ENCODE measurements at regions of chr15 and their contacts with region 1.

Region 1: GRCh38 chr15:73081321-73081958 is 29.2 kb downstream of the NEO1 start:
- DNase-seq: peak in 3 of 9 experiments; percentile 14 to 70 (median 64)
- ATAC-seq: no peak
- H3K4me3 ChIP-seq: no peak overlapping the region
- H3K4me3 Mint-ChIP-seq: no peak overlapping the region
- H3K27ac ChIP-seq: no peak overlapping the region
- H3K27ac Mint-ChIP-seq: no peak overlapping the region
- H3K4me1 ChIP-seq: no peaks in the 10 kb centered on the region
- H3K4me1 Mint-ChIP-seq: no peaks in the 10 kb centered on the region
- H3K27me3 ChIP-seq: no peaks in the 10 kb centered on the region
- H3K27me3 Mint-ChIP-seq: peaks cover 3% of the 10 kb centered on the region
- CTCF ChIP-seq: peak; percentile 72

Region 2: GRCh38 chr15:72599855-72600464 is 481.5 kb before region 1 on chr15:
- CTCF ChIA-PET with region 1: no interaction called
- POLR2A ChIA-PET with region 1: no interaction called
- intact Hi-C with region 1: loop called (anchors 5 to 10 kb)
- DNase-seq: peak in 4 of 9 experiments; percentile 5 to 56 (median 38)
- ATAC-seq: peak; percentile 34
- H3K4me3 ChIP-seq: no peak overlapping the region
- H3K4me3 Mint-ChIP-seq: no peak overlapping the region
- H3K27ac ChIP-seq: no peak overlapping the region
- H3K27ac Mint-ChIP-seq: no peak overlapping the region
- H3K4me1 ChIP-seq: no peaks in the 10 kb centered on the region
- H3K4me1 Mint-ChIP-seq: no peaks in the 10 kb centered on the region
- H3K27me3 ChIP-seq: no peaks in the 10 kb centered on the region
- H3K27me3 Mint-ChIP-seq: no peaks in the 10 kb centered on the region
- CTCF ChIP-seq: peak; percentile 73

Region 3: DNA sequence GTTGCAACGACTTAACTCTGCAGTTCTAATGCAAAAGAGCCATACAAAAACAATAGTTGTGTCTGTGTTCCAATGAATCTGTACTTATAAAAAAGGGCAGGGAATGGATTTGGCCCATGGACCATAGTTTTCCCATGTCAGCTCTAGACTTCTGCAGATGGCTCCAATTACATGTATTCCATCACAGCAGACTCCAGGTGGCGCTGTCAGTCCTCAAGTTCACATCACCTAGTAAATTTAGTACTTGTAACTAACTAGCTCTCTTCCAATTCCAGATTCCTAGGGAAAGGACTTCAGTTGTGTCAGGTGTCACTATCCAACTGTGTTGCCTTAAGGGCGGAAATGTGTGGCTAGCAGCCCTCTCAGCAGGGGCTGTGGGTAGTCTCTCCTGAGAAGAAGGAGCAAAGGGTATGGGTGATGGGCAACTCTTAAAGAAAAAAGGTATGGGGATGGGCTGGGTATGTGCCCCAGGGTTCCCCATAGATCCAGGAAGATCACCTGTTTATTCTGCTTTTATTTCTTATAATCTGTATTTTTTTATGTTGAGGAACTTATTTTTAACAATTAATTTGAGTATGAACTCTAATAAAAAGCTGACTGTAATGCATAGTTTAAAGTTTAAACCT is 359.3 kb before region 1 on chr15:
- CTCF ChIA-PET with region 1: interaction called, 23 read pairs
- POLR2A ChIA-PET with region 1: interaction called, 3 read pairs
- intact Hi-C with region 1: loop called (anchors 1 kb)
- DNase-seq: peak; percentile 37 to 76 (median 71)
- ATAC-seq: no peak
- H3K4me3 ChIP-seq: no peak overlapping the region
- H3K4me3 Mint-ChIP-seq: no peak overlapping the region
- H3K27ac ChIP-seq: no peak overlapping the region
- H3K27ac Mint-ChIP-seq: no peak overlapping the region
- H3K4me1 ChIP-seq: no peaks in the 10 kb centered on the region
- H3K4me1 Mint-ChIP-seq: no peaks in the 10 kb centered on the region
- H3K27me3 ChIP-seq: no peaks in the 10 kb centered on the region
- H3K27me3 Mint-ChIP-seq: no peaks in the 10 kb centered on the region
- CTCF ChIP-seq: peak; percentile 70

Region 4: GRCh38 chr15:72796515-72797337 is 284.7 kb before region 1 on chr15:
- CTCF ChIA-PET with region 1: interaction called, 5 read pairs
- POLR2A ChIA-PET with region 1: no interaction called
- intact Hi-C with region 1: loop called (anchors 1 to 2 kb)
- DNase-seq: peak in 8 of 9 experiments; percentile 19 to 73 (median 43)
- ATAC-seq: peak; percentile 82
- H3K4me3 ChIP-seq: peak overlapping the region; percentile 57 to 63
- H3K4me3 Mint-ChIP-seq: peak overlapping the region; percentile 83
- H3K27ac ChIP-seq: no peak overlapping the region
- H3K27ac Mint-ChIP-seq: no peak overlapping the region
- H3K4me1 ChIP-seq: peaks cover 9% of the 10 kb centered on the region
- H3K4me1 Mint-ChIP-seq: peaks cover 10% of the 10 kb centered on the region
- H3K27me3 ChIP-seq: peaks cover 0 to 2% of the 10 kb centered on the region in 2 experiments
- H3K27me3 Mint-ChIP-seq: peaks cover 45% of the 10 kb centered on the region
- CTCF ChIP-seq: peak; percentile 57

Region 5: DNA sequence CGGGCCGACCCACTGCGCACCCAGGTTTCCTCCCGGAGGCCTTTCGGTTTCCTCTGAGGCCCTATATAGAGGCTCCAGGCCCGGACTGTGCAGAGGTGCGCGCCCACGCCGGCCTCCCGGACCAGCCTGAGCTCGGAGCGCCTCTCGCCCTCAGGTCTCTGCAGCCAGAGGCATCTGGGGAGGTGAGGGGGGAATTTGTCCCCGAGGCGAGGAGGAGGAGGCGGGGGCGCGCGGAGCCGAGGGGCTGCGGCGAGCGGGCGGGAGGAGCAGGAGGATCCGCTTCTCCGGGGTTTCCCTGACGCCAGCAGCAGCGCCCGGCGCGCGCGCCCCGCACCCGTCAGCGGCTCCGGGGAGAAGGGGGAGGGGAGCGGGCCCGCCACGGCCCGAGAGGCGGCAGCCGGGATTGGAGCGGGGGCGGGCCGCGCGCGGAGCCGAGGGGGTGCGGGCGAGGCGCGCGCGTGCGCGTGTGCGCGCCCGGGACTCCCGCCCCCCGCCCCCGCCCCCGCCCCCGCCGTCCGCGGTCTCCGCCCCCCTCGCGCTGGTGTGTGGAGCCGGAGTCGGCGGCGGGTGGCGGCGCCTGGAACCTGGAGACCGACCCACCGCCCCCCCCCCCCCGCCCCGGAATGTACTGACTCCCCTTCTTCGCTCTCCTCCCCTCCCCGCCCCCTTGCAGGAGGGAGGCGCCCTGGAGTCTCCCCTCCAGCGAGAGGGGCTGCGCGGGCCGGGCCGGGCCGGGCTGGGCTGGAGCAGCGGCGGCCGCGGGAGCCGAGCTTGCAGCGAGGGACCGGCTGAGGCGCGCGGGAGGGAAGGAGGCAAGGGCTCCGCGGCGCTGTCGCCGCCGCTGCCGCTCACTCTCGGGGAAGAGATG is 29.4 kb before region 1 on chr15 and contains the start of gene NEO1:
- CTCF ChIA-PET with region 1: interaction called, 4 read pairs
- POLR2A ChIA-PET with region 1: interaction called, 3 read pairs
- intact Hi-C with region 1: loop called (anchors 2 kb)
- DNase-seq: peak; percentile 52 to 90 (median 78)
- ATAC-seq: peak; percentile 73
- H3K4me3 ChIP-seq: peak within 1 kb of the TSS; percentile 73 to 85
- H3K4me3 Mint-ChIP-seq: peak within 1 kb of the TSS; percentile 82
- H3K27ac ChIP-seq: peak within 1 kb of the TSS; percentile 56
- H3K27ac Mint-ChIP-seq: peak within 1 kb of the TSS; percentile 61
- H3K4me1 ChIP-seq: peaks cover 10% of the 10 kb centered on the region
- H3K4me1 Mint-ChIP-seq: peaks cover 13% of the 10 kb centered on the region
- H3K27me3 ChIP-seq: no peaks in the 10 kb centered on the region
- H3K27me3 Mint-ChIP-seq: peaks cover 21% of the 10 kb centered on the region
- CTCF ChIP-seq: no peak
- total RNA-seq, gene NEO1: 3.0 to 3.3 TPM

Region 6: DNA sequence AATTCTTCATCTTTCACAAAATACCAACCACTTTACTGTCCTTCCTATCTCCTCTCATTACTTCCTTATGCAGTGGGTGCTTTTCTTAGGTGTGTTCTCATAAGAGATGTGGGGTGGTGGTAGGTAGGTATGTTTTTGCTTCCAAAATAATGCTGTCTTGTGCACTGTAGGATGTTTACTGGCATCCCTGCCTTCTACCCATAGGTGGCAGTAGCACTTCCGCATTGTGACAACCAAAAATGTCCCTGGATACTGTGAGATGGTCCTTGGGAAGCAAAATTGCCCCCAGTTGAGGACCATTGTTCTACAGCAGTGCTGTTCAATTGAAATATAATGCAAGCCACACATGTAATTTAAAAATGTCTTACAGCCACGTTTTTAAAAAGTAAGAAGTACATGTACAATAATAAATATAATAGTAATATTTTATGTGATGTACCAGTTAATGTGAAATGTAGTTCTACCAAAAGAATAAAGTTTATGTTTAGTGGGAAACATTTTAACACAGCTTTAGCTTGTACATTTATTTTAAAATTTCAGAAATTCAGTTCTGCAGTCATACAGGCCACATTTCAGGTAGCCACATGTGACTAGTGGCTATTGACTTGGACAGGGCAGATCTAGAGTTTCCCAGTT is 46.0 kb after region 1 on chr15:
- CTCF ChIA-PET with region 1: no interaction called
- POLR2A ChIA-PET with region 1: no interaction called
- intact Hi-C with region 1: no loop called
- DNase-seq: peak in 4 of 9 experiments; percentile 3 to 34 (median 24)
- ATAC-seq: no peak
- H3K4me3 ChIP-seq: no peak overlapping the region
- H3K4me3 Mint-ChIP-seq: no peak overlapping the region
- H3K27ac ChIP-seq: no peak overlapping the region
- H3K27ac Mint-ChIP-seq: no peak overlapping the region
- H3K4me1 ChIP-seq: no peaks in the 10 kb centered on the region
- H3K4me1 Mint-ChIP-seq: no peaks in the 10 kb centered on the region
- H3K27me3 ChIP-seq: no peaks in the 10 kb centered on the region
- H3K27me3 Mint-ChIP-seq: peaks cover 16% of the 10 kb centered on the region
- CTCF ChIP-seq: peak; percentile 53